Gastrocnemius medialis (tissue), 4 donors: ENCODE measurements at regions of chr22 and their contacts with region 1.

Region 1: GRCh38 chr22:50326959-50327710 is at the start of gene DENND6B:
- DNase-seq: peak; percentile 49 to 75
- ATAC-seq: peak; percentile 93 to 94
- H3K4me3 ChIP-seq: peak within 1 kb of the TSS; percentile 76 to 94 (median 82)
- H3K27ac ChIP-seq: peak within 1 kb of the TSS; percentile 76 to 96 (median 90)
- H3K4me1 ChIP-seq: peaks cover 7 to 10% of the 10 kb centered on the region in 2 donors
- H3K27me3 ChIP-seq: no peaks in the 10 kb centered on the region
- CTCF ChIP-seq: peak in 4 of 5 experiments; percentile 87 to 95 (median 89)
- POLR2A ChIP-seq: peak in 1 of 2 donors; percentile 63
- total RNA-seq, gene DENND6B: 0.55 to 0.84 (median 0.68) TPM in 3 of 4 donors, not detected in the other

Region 2: DNA sequence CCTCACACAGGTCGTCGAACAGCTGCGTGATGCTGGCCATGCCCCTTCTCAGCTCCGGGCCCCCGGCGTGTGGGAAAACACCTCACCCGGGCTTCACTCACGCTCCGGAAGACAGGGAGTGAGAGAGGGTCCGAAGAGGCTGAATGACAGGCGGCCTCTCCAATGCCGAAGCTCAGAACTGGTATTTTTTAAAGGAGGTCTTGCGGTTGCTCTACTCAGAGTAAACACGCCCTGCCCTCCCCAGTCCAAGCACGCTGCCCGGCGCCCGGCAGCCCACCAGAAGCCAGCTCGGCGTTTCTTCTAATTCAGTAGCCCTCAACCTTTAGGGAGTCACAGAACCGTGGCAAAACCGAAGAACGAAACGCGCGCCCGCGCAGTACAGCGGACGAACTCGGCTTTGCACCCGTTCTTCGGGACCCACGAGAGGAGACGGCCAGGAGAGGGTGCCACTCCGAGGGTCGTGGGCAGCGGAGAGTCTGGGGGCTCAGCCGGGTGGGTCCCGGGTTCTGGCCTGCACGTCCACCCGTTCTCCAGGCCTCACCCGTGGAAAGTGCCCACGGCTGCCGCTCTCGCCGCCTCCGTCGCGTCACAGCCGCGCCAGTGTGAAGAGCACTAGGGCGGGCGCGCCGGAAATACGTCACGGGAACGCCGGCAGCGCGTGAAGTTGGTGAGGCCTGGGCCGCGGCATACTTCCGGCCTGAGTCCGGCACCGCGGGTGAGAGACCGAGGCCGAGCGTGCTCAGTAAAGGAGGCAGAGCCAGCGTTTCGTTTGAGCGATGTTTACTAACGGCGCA is 82.5 kb before region 1 on chr22 and contains the start of gene TUBGCP6:
- in situ Hi-C with region 1: no loop called
- intact Hi-C with region 1: loop called (anchors 1 kb)
- DNase-seq: peak; percentile 84 to 90
- ATAC-seq: peak; percentile 79 to 80
- H3K4me3 ChIP-seq: peak within 1 kb of the TSS; percentile 74 to 98 (median 81)
- H3K27ac ChIP-seq: peak within 1 kb of the TSS; percentile 88 to 98 (median 90)
- H3K4me1 ChIP-seq: peaks cover 43 to 46% of the 10 kb centered on the region in 2 donors
- H3K27me3 ChIP-seq: no peaks in the 10 kb centered on the region
- CTCF ChIP-seq: peak; percentile 24 to 43 (median 37)
- POLR2A ChIP-seq: peak; percentile 70 to 81
- total RNA-seq, gene TUBGCP6: 18.7 to 27.4 (median 19.2) TPM

Region 3: DNA sequence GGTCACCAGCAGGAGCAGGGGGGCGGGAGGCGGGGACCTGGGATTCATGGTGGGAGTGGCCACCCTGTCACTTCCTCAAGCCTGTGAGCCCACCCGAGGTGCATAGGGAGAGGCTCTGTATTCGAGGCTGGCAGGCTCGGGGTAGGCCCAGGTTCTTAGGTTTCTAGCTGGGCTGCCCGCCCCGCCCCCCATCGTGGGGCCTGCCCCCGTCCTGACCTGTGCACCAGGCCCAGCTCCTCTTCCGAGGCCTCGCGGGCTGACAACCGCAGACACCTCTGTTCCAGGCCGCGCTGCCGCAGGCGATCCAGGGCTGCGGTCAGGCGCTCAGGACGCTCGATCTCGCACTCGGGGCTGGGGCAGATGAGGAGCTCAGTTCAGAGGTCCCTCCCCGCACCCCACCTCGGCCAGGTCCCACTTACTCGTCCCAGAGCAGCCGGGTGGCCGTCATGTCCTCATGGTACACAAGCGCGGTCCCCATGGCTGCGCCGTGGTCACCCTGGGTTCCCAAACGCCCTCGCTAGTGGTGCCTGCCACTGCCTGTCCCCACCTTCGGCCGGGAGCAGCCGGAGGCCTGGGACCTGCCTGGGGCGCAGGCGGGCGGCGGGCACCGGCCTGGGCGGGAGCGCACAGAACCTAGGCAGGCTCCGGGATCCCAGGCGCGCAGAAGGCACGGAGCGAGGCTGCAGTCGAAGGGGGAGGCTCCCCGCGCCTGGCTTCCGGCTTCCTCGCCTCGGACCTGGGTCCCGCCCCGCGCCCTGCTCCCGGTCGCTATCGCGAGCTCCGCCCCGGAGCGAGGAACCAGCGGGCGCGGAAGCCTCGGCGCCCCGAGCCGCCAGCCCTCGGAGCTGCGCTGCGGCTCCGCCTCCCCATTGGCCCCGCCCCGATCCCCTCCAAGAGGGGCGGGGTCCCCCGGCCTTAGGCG is 76.3 kb before region 1 on chr22 and contains the start of gene HDAC10:
- in situ Hi-C with region 1: loop called in 2 of 4 experiments (anchors 10 kb)
- intact Hi-C with region 1: no loop called
- DNase-seq: peak in 1 of 2 donors; percentile 43
- ATAC-seq: peak; percentile 11 to 30
- H3K4me3 ChIP-seq: peak within 1 kb of the TSS; percentile 59 to 68 (median 62)
- H3K27ac ChIP-seq: peak within 1 kb of the TSS; percentile 62 to 97 (median 75)
- H3K4me1 ChIP-seq: peaks cover 18 to 30% of the 10 kb centered on the region in 2 donors
- H3K27me3 ChIP-seq: no peaks in the 10 kb centered on the region
- CTCF ChIP-seq: no peak
- POLR2A ChIP-seq: no peak
- total RNA-seq, gene HDAC10: 4.1 to 24.9 (median 8.6) TPM

Region 4: DNA sequence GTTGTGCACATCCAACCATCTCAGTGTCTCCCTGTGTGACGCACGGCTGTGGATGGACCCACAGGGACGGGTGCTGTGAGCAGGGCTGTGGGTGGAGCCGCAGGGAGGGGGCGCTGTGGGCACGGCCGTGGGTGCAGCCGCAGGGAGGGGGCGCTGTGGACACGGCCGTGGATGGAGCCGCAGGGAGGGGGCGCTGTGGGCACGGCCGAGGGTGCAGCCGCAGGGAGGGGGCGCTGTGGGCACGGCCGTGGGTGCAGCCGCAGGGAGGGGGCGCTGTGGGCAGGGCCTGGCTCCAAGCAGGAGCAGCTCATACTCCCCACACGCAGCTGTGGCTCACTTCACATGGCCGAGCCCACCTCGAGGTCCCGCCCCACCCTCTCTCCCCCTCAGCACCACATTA is 51.0 kb before region 1 on chr22:
- in situ Hi-C with region 1: loop called in 2 of 4 experiments (anchors 10 kb)
- intact Hi-C with region 1: loop called (anchors 5 kb)
- DNase-seq: no peak
- ATAC-seq: peak; percentile 6 to 40
- H3K4me3 ChIP-seq: no peak overlapping the region
- H3K27ac ChIP-seq: no peak overlapping the region
- H3K4me1 ChIP-seq: peaks cover 4 to 12% of the 10 kb centered on the region in 2 donors
- H3K27me3 ChIP-seq: peaks cover 2 to 7% (median 4%) of the 10 kb centered on the region in 3 donors
- CTCF ChIP-seq: peak in 2 of 5 experiments; percentile 28 to 46
- POLR2A ChIP-seq: no peak

Region 5: DNA sequence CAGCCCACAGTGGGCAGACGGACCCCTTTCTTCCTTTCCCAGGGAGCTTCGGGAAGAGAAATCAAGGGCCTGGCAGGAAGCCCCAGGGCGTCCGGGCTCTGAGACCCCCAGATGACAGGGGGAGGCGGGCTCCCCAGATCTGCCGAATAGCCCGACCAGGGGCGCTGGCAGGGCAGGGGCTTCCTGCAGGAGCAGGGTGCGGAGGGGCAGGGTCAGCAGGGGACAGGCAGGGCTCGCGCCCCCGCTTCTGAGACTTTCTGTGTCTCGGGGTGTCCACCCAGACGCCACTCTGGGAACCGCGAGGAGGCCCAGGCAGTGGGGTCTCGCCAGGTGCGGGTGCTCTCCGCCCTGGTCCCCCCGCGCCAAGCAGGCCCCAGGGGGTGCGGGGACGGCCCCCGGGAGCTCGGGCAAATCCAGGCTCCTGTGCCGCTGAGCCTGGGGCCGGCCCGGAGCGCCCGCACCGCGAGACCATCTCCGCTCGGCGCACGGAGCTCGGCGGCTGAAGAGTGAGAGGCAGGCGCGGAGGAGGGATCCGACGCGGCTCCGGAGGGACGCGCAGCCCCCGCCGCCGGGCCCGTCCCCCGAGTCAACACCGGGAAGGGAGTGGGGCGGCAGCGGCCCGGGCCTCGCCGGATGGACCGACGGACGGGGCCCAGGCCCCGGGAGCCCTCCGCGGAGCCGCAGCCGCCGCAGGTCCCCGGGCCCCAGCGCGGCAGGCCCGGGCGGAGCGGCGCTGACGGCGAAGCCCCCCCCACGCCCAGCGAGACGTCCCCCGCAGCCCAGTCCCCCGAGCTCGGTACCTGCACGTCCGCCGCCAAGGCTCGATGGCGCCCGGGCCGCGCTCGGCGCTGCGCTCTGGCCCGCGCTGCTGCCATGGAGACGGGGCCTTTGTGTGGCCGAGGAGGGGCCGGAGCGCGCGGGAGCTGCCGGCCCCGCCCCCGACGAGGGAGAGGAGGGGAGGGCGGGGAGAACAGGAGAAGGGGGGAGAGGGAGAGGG is 20.1 kb before region 1 on chr22 and contains the start of gene PLXNB2:
- in situ Hi-C with region 1: no loop called
- intact Hi-C with region 1: loop called (anchors 2 kb)
- DNase-seq: peak in 1 of 2 donors; percentile 51
- ATAC-seq: peak; percentile 43 to 45
- H3K4me3 ChIP-seq: peak within 1 kb of the TSS; percentile 59 to 70 (median 62)
- H3K27ac ChIP-seq: peak within 1 kb of the TSS; percentile 55 to 75 (median 66)
- H3K4me1 ChIP-seq: peaks cover 12 to 34% of the 10 kb centered on the region in 2 donors
- H3K27me3 ChIP-seq: peaks cover 0 to 5% (median 4%) of the 10 kb centered on the region in 3 donors
- CTCF ChIP-seq: no peak
- POLR2A ChIP-seq: peak; percentile 14 to 15
- total RNA-seq, gene PLXNB2: 8.0 to 11.8 (median 9.0) TPM

Region 6: GRCh38 chr22:50341977-50342650 is 15.0 kb after region 1 on chr22:
- in situ Hi-C with region 1: no loop called
- intact Hi-C with region 1: loop called (anchors 1 kb)
- DNase-seq: peak; percentile 74 to 86
- ATAC-seq: peak; percentile 85 to 90
- H3K4me3 ChIP-seq: peak overlapping the region; percentile 69 to 88 (median 75)
- H3K27ac ChIP-seq: peak overlapping the region; percentile 71 to 92 (median 88)
- H3K4me1 ChIP-seq: peaks cover 9 to 18% of the 10 kb centered on the region in 2 donors
- H3K27me3 ChIP-seq: no peaks in the 10 kb centered on the region
- CTCF ChIP-seq: peak; percentile 89 to 98 (median 97)
- POLR2A ChIP-seq: no peak

Region 7: DNA sequence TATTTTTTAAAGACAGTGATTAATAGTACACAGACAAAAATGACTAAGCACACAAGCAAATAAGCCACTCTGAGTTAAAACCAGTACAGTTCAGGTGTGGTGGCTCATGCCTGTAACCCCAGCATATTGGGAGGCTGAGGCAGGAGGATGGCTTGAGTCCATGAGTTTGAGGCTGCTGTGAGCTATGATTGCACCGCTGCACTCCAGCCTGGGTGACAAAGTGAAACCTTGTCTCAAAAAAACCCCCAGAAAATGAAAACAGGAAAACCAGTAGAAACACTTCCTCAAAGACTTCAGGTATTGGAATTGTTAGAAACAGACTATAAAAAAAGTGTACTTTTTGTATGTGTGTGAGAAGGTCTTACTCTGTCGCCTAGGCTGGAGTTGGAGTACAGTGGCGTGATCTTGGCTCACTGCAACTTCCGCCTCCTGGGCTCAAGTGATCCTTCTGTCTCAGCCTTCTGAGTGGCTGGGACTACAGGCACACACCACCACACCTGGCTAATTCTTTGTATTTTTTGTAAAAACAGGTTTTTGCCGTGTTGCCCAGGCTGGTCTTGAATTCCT is 49.0 kb after region 1 on chr22:
- in situ Hi-C with region 1: no loop called
- intact Hi-C with region 1: no loop called
- DNase-seq: no peak
- ATAC-seq: no peak
- H3K4me3 ChIP-seq: no peak overlapping the region
- H3K27ac ChIP-seq: no peak overlapping the region
- H3K4me1 ChIP-seq: no peaks in the 10 kb centered on the region
- H3K27me3 ChIP-seq: no peaks in the 10 kb centered on the region
- CTCF ChIP-seq: no peak
- POLR2A ChIP-seq: no peak

Region 8: GRCh38 chr22:50474668-50475492 is 147.7 kb after region 1 on chr22 and contains the start of gene SBF1:
- in situ Hi-C with region 1: no loop called
- intact Hi-C with region 1: no loop called
- DNase-seq: peak; percentile 85 to 89
- ATAC-seq: peak; percentile 91 to 95
- H3K4me3 ChIP-seq: peak within 1 kb of the TSS; percentile 66 to 95 (median 78)
- H3K27ac ChIP-seq: peak within 1 kb of the TSS; percentile 77 to 88 (median 86)
- H3K4me1 ChIP-seq: peaks cover 44 to 47% of the 10 kb centered on the region in 2 donors
- H3K27me3 ChIP-seq: peaks cover 2 to 7% (median 6%) of the 10 kb centered on the region in 3 donors
- CTCF ChIP-seq: no peak
- POLR2A ChIP-seq: peak; percentile 89 to 96
- total RNA-seq, gene SBF1: 50.5 to 116 (median 107) TPM